Ovary (tissue), 10 donors: ENCODE measurements at regions of chr9 and their contacts with region 1.

Region 1: GRCh38 chr9:36479101-36479500 is 79.0 kb upstream of the RNF38 start:
- DNase-seq: no peak
- H3K4me3 ChIP-seq: no peak overlapping the region
- H3K27ac ChIP-seq: no peak overlapping the region
- H3K4me1 ChIP-seq: peaks cover 5% of the 10 kb centered on the region
- H3K27me3 ChIP-seq: no peaks in the 10 kb centered on the region
- CTCF ChIP-seq: no peak
- EP300 ChIP-seq: no peak
- POLR2A ChIP-seq: no peak

Region 2: DNA sequence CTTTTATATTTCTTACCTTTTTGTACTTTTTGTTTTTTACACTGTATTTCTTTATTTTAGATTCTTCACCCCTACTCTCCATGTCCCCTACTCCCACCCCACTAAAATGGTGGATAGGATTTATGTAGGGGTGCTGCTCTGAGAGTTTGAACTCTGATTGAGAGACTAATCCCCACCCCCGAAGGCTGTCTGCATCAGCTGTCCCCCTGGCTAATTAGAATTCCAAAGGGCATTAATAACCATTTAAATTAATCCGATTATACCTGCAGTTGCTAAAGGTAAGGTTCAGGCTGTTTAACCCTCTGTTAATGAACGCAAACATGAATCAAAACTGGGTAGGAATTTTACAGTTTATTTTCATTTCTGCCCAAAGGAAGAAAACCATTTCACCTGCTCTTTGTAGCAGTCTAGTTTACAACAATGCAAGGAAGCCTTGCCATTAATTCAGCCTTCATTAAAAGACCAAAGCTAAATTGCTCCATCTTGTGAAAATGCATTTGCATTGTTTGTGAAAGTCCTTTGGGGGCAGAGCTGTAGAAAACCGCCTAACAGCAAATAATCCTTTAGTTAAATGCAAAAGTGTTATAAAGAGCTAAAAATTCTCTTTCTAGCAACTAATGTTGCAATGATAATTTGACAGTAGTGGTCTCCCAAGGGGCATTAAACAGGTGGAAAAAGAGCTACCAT is 712.4 kb after region 1 on chr9:
- intact Hi-C with region 1: loop called in 1 of 4 experiments (anchors 5 kb)
- DNase-seq: no peak
- H3K4me3 ChIP-seq: no peak overlapping the region
- H3K27ac ChIP-seq: no peak overlapping the region
- H3K4me1 ChIP-seq: no peaks in the 10 kb centered on the region
- H3K27me3 ChIP-seq: no peaks in the 10 kb centered on the region
- CTCF ChIP-seq: no peak
- EP300 ChIP-seq: no peak
- POLR2A ChIP-seq: no peak